HCT116 (cell line): ENCODE measurements at regions of chr14 and their contacts with region 1.

Region 1: DNA sequence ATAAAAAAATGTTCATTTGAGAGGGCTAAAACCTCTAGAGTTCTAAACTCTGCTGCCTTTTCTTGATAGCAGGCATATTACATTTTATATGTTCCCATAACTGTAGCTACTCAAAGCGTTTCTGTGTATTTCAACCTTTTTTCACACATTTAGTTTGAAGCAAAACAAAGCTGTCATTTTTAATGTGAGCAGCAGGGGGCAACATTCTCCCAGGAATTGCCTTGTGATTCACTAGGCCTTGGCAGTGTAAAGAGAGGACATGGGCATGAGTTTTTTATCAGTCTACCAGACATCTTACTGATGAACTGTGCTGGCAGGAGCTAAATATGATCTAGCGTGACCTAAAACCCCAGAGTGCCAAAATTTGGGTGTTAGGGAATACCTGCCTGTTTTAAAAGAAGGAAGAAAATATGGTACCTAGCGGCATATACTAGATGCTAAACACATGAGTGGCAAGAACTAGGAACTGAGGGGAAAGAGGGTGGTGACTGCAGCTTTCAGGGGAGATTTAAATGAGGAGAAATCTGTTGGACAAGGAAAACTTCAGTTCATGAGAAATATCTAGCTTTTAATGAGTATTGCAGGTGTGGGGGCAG is 65.3 kb downstream of the IFT43 start:
- DNase-seq: peak; percentile 21
- ATAC-seq: peak; percentile 68
- H3K4me3 ChIP-seq: no peak overlapping the region
- H3K27ac ChIP-seq: no peak overlapping the region
- H3K4me1 ChIP-seq: no peaks in the 10 kb centered on the region
- H3K27me3 ChIP-seq: no peaks in the 10 kb centered on the region
- CTCF ChIP-seq: peak; percentile 66 to 89 (median 77)
- POLR2A ChIP-seq: no peak
- RAD21 ChIP-seq: peak; percentile 85

Region 2: GRCh38 chr14:75979071-75979571 is 71.8 kb before region 1 on chr14:
- CTCF ChIA-PET with region 1: no interaction called
- POLR2A ChIA-PET with region 1: no interaction called
- RAD21 ChIA-PET with region 1: no interaction called
- intact Hi-C with region 1: no loop called
- DNase-seq: no peak
- ATAC-seq: peak; percentile 35; the same call in 1 of the 2 replicates
- H3K4me3 ChIP-seq: no peak overlapping the region
- H3K27ac ChIP-seq: no peak overlapping the region
- H3K4me1 ChIP-seq: peaks cover 10 to 16% of the 10 kb centered on the region in 2 experiments
- H3K27me3 ChIP-seq: no peaks in the 10 kb centered on the region
- CTCF ChIP-seq: peak; percentile 67 to 73 (median 68)
- POLR2A ChIP-seq: no peak
- RAD21 ChIP-seq: peak; percentile 81

Region 3: DNA sequence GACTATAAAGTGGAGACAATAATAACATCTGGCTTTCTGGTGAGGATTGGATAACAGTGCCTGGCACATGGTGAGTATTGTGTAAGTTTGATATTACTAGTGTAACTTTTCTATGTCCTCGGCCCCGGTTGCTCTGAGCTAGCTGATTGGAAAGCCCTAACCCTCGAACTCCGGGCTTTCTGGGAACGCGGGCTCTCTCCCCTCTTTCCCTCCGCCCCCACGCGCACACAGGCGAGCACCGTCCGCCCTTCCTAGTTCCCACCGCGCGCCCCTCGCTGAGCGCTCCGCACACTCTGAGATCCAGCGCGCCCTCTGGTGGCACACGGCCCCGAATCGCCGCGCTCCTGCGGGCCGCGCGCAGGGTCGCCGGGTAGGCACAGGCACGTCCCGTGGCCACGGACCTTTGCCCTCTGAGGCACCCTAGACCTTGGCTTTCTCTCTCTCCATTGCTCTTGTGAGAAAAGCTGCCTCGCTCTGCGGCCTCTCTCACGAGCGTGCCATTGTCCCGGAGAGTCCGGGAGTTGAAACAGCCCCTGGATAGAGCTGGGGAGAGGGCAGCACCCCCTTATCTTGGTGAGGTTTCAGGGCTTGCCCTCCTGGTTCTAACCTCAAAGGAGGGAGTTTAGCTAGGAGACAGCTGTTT is 301.9 kb after region 1 on chr14:
- CTCF ChIA-PET with region 1: interaction called, 8 read pairs
- POLR2A ChIA-PET with region 1: no interaction called
- RAD21 ChIA-PET with region 1: interaction called in 1 of 2 experiments, 4 read pairs
- intact Hi-C with region 1: loop called (anchors 1 kb)
- DNase-seq: no peak
- ATAC-seq: peak; percentile 81
- H3K4me3 ChIP-seq: no peak overlapping the region
- H3K27ac ChIP-seq: no peak overlapping the region
- H3K4me1 ChIP-seq: peaks cover 11 to 39% of the 10 kb centered on the region in 2 experiments
- H3K27me3 ChIP-seq: peaks cover 9% of the 10 kb centered on the region; the same call in 1 of the 2 replicates
- CTCF ChIP-seq: peak; percentile 62 to 82 (median 79); a peak in 5 of 6 replicates
- POLR2A ChIP-seq: no peak
- RAD21 ChIP-seq: peak; percentile 81

Region 4: DNA sequence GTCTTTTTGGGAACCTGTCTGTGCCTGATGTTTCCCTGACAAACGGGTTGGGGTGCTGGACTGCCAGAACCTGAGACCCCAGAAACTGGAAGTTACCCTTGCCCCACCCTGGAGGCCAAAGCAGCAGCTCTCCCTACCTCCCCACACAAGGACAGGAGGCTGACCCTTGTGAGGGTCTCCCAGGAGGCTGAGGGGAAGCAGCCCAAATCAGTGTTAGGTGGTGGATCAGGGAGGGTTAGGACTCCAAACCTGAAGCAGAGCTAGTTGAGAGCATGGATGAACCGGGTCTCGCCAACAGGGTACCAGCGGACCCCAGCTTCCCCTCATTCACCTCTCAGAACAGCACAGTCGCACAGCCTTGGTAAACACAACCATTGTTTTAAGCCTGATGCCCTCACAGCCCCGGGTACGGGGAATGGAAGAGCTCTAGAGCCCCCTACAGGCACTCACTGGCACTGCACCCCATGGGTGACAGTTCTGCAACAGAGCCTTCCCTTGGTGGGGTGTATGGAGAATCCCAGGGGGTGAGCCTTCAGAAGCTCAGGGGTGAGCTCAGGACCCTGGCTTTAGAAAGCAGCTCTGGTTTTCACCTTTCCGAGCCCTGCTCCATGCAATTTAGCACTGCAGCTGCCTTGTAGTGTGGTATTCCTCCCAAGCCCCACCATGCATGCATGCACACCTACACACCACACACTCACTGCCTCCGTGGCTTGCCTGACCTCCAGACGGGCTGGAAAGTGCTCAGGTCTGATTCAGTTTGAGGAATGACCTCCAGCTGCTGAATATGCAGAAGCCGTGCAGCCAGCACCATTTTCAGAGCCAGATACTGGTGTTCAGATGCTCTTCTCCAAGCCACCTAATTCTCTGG is 336.3 kb after region 1 on chr14:
- CTCF ChIA-PET with region 1: interaction called, 33 read pairs
- POLR2A ChIA-PET with region 1: no interaction called
- RAD21 ChIA-PET with region 1: interaction called, 3 read pairs
- intact Hi-C with region 1: loop called (anchors 1 kb)
- DNase-seq: peak; percentile 37
- ATAC-seq: peak; percentile 99
- H3K4me3 ChIP-seq: no peak overlapping the region
- H3K27ac ChIP-seq: no peak overlapping the region
- H3K4me1 ChIP-seq: peaks cover 0 to 3% of the 10 kb centered on the region in 2 experiments; a peak in 1 of 4 replicates
- H3K27me3 ChIP-seq: peaks cover 39% of the 10 kb centered on the region
- CTCF ChIP-seq: peak; percentile 74 to 100 (median 98); a peak in 5 of 6 replicates
- POLR2A ChIP-seq: no peak
- RAD21 ChIP-seq: peak; percentile 93

Region 5: DNA sequence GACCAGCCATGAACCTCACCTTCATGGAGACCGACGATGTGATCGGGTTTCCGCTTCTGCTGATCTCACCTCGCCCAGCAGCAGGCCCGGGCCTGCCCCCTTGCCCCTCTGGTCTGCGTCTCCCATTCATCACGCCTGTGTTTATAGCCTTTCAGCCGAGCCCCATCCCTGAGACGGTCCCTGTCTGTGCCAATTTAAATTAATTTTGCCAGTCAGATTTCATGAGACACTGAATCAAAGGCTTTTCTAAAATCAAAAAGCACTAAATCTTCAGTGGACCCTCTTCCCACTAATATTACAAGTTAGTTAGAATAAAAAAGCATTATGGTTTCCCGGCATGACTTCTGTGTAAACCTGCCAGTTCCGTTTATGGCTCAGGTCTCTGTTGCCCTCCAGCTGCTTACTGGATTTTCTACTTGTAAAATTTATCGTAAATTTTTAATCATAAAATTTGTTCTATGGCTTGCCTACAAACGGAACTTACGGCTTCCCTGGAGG is 481.0 kb after region 1 on chr14:
- CTCF ChIA-PET with region 1: no interaction called
- POLR2A ChIA-PET with region 1: no interaction called
- RAD21 ChIA-PET with region 1: no interaction called
- intact Hi-C with region 1: no loop called
- DNase-seq: no peak
- ATAC-seq: no peak
- H3K4me3 ChIP-seq: no peak overlapping the region
- H3K27ac ChIP-seq: no peak overlapping the region
- H3K4me1 ChIP-seq: no peaks in the 10 kb centered on the region
- H3K27me3 ChIP-seq: no peaks in the 10 kb centered on the region
- CTCF ChIP-seq: no peak
- POLR2A ChIP-seq: no peak
- RAD21 ChIP-seq: no peak